ENCODE measurements at regions of chr6 and their contacts with region 1.

Region 1: GRCh38 chr6:53718597-53719460 is 53.3 kb upstream of the KLHL31 start:
- DNase-seq: no peak
- ATAC-seq: peak; percentile 83 to 98 (median 91)
- H3K4me3 ChIP-seq: peak overlapping the region; percentile 46
- H3K27ac ChIP-seq: peak overlapping the region; percentile 53
- H3K4me1 ChIP-seq: no peaks in the 10 kb centered on the region
- H3K27me3 ChIP-seq: no peaks in the 10 kb centered on the region
- CTCF ChIP-seq: peak; percentile 79

Region 2: GRCh38 chr6:53643481-53643965 is 75.3 kb before region 1 on chr6:
- intact Hi-C with region 1: no loop called
- DNase-seq: no peak
- ATAC-seq: peak; percentile 29 to 65 (median 52)
- H3K4me3 ChIP-seq: no peak overlapping the region
- H3K27ac ChIP-seq: no peak overlapping the region
- H3K4me1 ChIP-seq: peaks cover 4% of the 10 kb centered on the region
- H3K27me3 ChIP-seq: no peaks in the 10 kb centered on the region
- CTCF ChIP-seq: no peak

Region 3: DNA sequence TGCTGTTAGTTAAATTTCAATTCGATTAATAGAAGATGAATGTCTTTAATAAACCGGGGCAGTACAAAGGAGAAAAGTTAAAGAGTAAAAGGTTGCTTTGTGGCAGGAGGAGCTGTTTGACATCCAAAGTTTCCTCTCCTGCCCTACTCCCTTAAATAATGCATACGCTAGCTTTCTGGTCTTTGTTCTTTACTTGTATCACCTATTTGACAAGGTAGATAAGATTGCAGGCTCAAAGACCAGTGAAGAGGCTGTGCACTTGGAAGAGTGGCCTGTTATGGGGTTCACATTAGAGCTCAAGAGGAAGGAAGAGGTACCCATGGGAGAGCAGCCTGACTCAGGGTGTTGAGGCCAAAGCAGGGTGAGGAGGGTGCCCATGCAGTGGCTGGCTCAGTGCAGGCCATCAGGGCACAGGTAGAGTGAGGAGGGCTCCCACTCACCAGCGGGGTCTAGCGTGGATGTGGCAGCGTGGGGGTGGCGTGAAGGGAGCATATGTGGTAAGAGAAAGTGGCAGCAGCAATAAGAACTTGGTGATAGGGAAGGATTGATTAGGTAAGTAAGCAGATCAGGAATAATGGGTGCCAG is 23.9 kb before region 1 on chr6:
- intact Hi-C with region 1: loop called in 1 of 2 experiments (anchors 2 kb)
- DNase-seq: no peak
- ATAC-seq: no peak
- H3K4me3 ChIP-seq: no peak overlapping the region
- H3K27ac ChIP-seq: no peak overlapping the region
- H3K4me1 ChIP-seq: peaks cover 26% of the 10 kb centered on the region
- H3K27me3 ChIP-seq: no peaks in the 10 kb centered on the region
- CTCF ChIP-seq: no peak

Measured in psoas muscle (tissue), 8 donors.